ENCODE measurements at regions of chr12 and their contacts with region 1.

Region 1: DNA sequence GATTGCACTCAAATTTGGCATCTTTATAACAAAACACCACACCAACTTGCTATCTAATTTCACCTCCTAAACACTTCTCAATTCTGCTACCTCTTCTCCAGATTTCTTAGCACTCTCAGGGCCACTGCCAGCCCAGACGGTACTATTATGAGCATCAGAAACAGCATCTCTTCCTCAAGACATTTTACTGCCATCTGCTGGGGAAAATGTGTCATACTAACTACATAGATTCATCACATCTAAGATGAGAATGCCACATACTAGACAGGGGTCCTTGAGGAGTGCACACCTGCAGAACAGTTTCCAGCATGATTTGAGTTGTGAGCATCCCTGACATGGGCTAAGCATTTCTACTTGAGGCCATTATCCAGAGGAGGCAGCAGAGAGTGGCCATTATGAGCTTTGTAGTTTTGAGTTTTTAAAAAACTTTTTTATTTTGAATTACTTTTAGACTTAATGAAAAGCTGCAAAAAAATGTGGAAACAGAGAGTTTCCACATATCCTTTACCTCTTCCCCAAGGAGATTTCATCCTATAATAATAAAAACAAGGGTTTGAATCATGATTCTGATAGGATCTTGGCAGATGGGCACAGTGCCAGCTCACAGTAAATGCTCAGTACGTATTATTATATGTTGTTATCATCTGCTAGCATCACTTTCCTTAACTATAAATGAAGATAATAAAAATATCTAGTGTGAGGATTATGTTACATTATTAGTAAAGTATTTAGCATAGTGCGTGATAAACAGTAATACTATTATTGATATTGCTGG is 15.2 kb upstream of the GRIP1 start:
- DNase-seq: peak; percentile 45 to 63 (median 58)
- H3K4me3 ChIP-seq: no peak overlapping the region
- H3K4me3 Mint-ChIP-seq: no peak overlapping the region
- H3K27ac ChIP-seq: no peak overlapping the region
- H3K27ac Mint-ChIP-seq: peak overlapping the region in 1 of 7 donors; percentile 31
- H3K4me1 ChIP-seq: peaks cover 23 to 30% of the 10 kb centered on the region in 2 donors
- H3K4me1 Mint-ChIP-seq: peaks cover 32% of the 10 kb centered on the region
- H3K27me3 ChIP-seq: no peaks in the 10 kb centered on the region
- H3K27me3 Mint-ChIP-seq: peaks cover 0 to 2% (median 0%) of the 10 kb centered on the region in 3 donors
- CTCF ChIP-seq: peak; percentile 79

Region 2: GRCh38 chr12:66352197-66352596 is 341.9 kb before region 1 on chr12:
- intact Hi-C with region 1: loop called in 1 of 2 experiments (anchors 10 kb)
- DNase-seq: peak; percentile 34 to 54 (median 50)
- H3K4me3 ChIP-seq: no peak overlapping the region
- H3K4me3 Mint-ChIP-seq: no peak overlapping the region
- H3K27ac ChIP-seq: no peak overlapping the region
- H3K27ac Mint-ChIP-seq: peak overlapping the region in 2 of 7 donors; percentile 9 to 28
- H3K4me1 ChIP-seq: no peaks in the 10 kb centered on the region
- H3K4me1 Mint-ChIP-seq: peaks cover 10% of the 10 kb centered on the region
- H3K27me3 ChIP-seq: no peaks in the 10 kb centered on the region
- H3K27me3 Mint-ChIP-seq: no peaks in the 10 kb centered on the region
- CTCF ChIP-seq: peak; percentile 52

Region 3: GRCh38 chr12:66653801-66654200 is 40.3 kb before region 1 on chr12:
- intact Hi-C with region 1: no loop called
- DNase-seq: no peak
- H3K4me3 ChIP-seq: no peak overlapping the region
- H3K4me3 Mint-ChIP-seq: no peak overlapping the region
- H3K27ac ChIP-seq: no peak overlapping the region
- H3K27ac Mint-ChIP-seq: no peak overlapping the region
- H3K4me1 ChIP-seq: no peaks in the 10 kb centered on the region
- H3K4me1 Mint-ChIP-seq: no peaks in the 10 kb centered on the region
- H3K27me3 ChIP-seq: no peaks in the 10 kb centered on the region
- H3K27me3 Mint-ChIP-seq: peaks cover 0 to 4% (median 0%) of the 10 kb centered on the region in 3 donors
- CTCF ChIP-seq: no peak

Measured in CD14-positive monocyte (primary cell).